CD4-positive, alpha-beta memory T cell (primary cell): ENCODE measurements at regions of chr11 and their contacts with region 1.

Region 1: DNA sequence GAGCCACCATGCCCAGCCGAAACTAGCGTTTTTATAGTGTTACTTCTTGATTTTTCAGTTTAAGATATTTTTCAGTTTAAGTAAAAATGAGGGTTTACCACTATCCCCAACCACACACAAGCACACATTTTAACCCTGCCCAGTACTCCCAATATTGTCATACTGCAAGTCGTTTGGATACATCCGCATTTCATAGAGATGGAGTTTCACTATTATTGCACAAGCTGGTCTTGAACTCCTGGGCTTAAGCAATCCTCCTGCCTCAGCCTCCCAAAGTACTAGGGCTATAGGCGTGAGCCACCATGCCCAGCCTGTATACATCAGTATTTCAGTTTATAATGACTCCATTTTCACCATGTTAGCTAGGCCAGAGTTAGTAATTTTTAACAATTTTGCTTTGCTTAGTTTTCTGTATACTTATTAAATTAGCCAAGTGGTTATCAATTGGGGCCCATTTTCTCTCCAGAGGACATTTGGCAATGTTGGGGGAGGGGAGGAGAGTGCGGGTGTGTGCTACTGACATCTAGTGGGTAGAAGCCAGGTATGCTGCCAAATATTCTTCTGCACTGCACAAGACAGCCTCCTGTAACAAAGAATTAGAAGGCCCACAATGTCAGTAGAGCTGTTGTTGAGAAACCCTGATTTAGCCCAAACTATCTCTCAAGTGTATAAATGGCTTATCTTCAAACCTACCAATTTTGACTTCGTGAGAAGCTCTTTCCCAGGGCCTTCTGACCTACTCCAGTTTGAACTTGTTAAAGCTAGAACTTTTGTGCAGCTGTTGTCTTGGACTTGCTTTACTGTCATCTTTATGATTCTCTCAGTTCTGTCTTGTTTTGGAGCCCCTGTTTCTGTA is 7.3 kb downstream of the USP47 start:
- DNase-seq: peak; percentile 68 to 75 (median 71)
- H3K4me3 ChIP-seq: peak overlapping the region in 1 of 2 donors; percentile 15
- H3K4me3 Mint-ChIP-seq: peak overlapping the region in 6 of 8 donors; percentile 13 to 60 (median 32)
- H3K27ac ChIP-seq: no peak overlapping the region
- H3K27ac Mint-ChIP-seq: peak overlapping the region in 6 of 7 donors; percentile 29 to 84 (median 64)
- H3K4me1 ChIP-seq: peaks cover 93% of the 10 kb centered on the region
- H3K4me1 Mint-ChIP-seq: peaks cover 45 to 71% (median 50%) of the 10 kb centered on the region in 4 donors
- H3K27me3 ChIP-seq: no peaks in the 10 kb centered on the region
- H3K27me3 Mint-ChIP-seq: no peaks in the 10 kb centered on the region

Region 2: DNA sequence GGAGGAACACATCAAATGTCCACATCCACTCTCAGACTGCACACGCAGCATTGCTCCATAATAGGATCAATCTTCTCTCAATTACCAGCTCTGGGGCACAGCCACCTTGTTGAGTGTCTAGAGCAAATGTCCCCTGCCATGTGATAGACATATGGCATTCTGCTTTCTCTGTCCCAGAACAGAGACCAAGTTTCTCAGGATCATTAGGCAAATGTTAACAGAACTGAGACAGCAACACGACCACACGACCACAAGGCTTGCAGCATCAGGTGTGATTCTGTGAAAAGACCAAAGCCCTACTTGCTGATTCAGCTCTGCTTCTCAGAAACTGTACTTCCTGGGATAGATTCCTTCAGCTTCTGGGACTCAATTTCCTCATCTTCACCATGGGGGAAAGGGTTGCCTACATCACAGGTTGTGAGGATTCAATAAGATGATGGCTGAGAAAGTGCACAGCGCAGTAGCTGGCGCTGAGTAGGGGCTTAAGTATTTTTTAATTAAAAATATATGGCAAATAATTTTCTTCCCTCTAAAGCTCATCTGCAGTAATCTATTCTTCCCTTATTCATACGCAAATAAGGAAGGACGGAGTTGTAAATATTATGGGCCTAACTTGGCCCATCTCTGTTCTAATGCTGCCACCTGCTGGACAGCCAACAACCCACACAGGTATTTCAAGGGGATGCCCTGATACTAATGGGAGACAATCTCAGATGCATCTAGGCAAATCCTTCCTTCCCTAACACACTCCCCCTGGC is 61.6 kb before region 1 on chr11:
- CTCF ChIA-PET with region 1: interaction called, 14 read pairs
- POLR2A ChIA-PET with region 1: no interaction called
- intact Hi-C with region 1: no loop called
- DNase-seq: peak; percentile 59 to 67 (median 61)
- H3K4me3 ChIP-seq: no peak overlapping the region
- H3K4me3 Mint-ChIP-seq: no peak overlapping the region
- H3K27ac ChIP-seq: no peak overlapping the region
- H3K27ac Mint-ChIP-seq: no peak overlapping the region
- H3K4me1 ChIP-seq: no peaks in the 10 kb centered on the region
- H3K4me1 Mint-ChIP-seq: peaks cover 0 to 1% (median 0%) of the 10 kb centered on the region in 4 donors
- H3K27me3 ChIP-seq: no peaks in the 10 kb centered on the region
- H3K27me3 Mint-ChIP-seq: peaks cover 0 to 7% of the 10 kb centered on the region in 2 donors

Region 3: DNA sequence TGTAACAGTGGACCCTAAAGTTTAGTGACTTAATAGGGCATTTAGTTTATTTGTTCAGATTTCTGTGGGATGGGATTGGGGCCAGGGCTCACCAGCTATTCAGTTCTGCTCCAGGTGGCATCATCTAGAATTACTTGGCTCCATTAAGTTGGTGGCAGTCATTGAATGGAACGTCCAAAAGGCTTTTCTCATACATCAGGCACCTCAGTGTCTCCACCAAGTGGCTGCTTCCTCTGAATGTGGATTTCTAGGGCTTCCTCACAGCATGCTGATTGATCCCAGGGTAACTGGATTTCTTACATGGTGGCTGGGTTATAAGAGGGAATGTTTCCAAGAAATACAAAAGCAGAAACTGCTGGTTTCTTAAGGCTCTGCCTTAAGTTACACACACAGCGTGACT is 27.3 kb after region 1 on chr11:
- CTCF ChIA-PET with region 1: interaction called, 10 read pairs
- POLR2A ChIA-PET with region 1: no interaction called
- intact Hi-C with region 1: no loop called
- DNase-seq: peak in 1 of 5 donors; percentile 20
- H3K4me3 ChIP-seq: no peak overlapping the region
- H3K4me3 Mint-ChIP-seq: no peak overlapping the region
- H3K27ac ChIP-seq: no peak overlapping the region
- H3K27ac Mint-ChIP-seq: no peak overlapping the region
- H3K4me1 ChIP-seq: peaks cover 35% of the 10 kb centered on the region
- H3K4me1 Mint-ChIP-seq: peaks cover 28 to 64% (median 49%) of the 10 kb centered on the region in 4 donors
- H3K27me3 ChIP-seq: no peaks in the 10 kb centered on the region
- H3K27me3 Mint-ChIP-seq: no peaks in the 10 kb centered on the region